B cell (primary cell): ENCODE measurements at regions of chr1 and their contacts with region 1.

Region 1: GRCh38 chr1:63691701-63692425 is 82.0 kb upstream of the ROR1 start:
- DNase-seq: peak; percentile 64
- ATAC-seq: peak; percentile 61
- H3K4me3 ChIP-seq: no peak overlapping the region
- H3K4me3 Mint-ChIP-seq: no peak overlapping the region
- H3K27ac ChIP-seq: no peak overlapping the region
- H3K27ac Mint-ChIP-seq: no peak overlapping the region
- H3K4me1 ChIP-seq: no peaks in the 10 kb centered on the region
- H3K4me1 Mint-ChIP-seq: no peaks in the 10 kb centered on the region
- H3K27me3 ChIP-seq: peaks cover 0 to 3% (median 0%) of the 10 kb centered on the region in 4 experiments
- H3K27me3 Mint-ChIP-seq: peaks cover 1% of the 10 kb centered on the region
- CTCF ChIP-seq: peak; percentile 83

Region 2: DNA sequence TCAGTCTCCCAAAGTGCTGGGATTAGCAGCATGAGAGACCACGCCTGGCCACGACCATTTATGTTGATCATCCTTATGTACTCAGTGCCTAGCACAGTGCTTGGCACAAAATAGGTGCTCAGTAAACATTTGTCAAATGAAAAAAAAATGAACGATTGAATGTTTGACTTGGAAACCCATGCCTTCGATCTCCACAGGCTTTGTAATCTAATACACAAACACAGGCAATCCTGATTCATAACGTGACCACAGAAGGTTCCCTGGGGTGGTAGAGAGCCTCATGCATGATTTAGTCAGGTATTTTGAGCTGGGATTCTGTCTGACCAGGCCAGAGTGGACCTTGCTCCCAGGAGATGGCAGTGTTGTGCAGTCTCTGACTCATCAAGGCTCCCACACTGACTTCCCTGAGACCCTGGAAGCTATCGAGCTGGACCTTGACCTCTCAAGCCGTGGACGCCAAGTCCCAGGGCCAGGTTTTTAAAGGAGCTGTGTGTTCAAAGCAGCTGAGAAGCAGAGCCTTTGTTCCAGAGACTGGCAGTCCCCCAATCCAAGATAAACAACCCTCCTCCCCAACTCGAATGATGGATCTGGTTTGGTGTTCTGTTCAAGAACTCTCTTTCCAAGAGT is 17.5 kb before region 1 on chr1:
- CTCF ChIA-PET with region 1: interaction called, 13 read pairs
- POLR2A ChIA-PET with region 1: no interaction called
- intact Hi-C with region 1: no loop called
- DNase-seq: no peak
- ATAC-seq: no peak
- H3K4me3 ChIP-seq: no peak overlapping the region
- H3K4me3 Mint-ChIP-seq: no peak overlapping the region
- H3K27ac ChIP-seq: no peak overlapping the region
- H3K27ac Mint-ChIP-seq: no peak overlapping the region
- H3K4me1 ChIP-seq: no peaks in the 10 kb centered on the region
- H3K4me1 Mint-ChIP-seq: no peaks in the 10 kb centered on the region
- H3K27me3 ChIP-seq: no peaks in the 10 kb centered on the region
- H3K27me3 Mint-ChIP-seq: no peaks in the 10 kb centered on the region
- CTCF ChIP-seq: no peak

Region 3: GRCh38 chr1:63773815-63774616 is 82.2 kb after region 1 on chr1 and contains the start of gene ROR1:
- CTCF ChIA-PET with region 1: interaction called, 15 read pairs
- POLR2A ChIA-PET with region 1: no interaction called
- intact Hi-C with region 1: loop called (anchors 1 kb)
- DNase-seq: peak; percentile 72
- ATAC-seq: peak; percentile 90
- H3K4me3 ChIP-seq: peak within 1 kb of the TSS; percentile 42 to 72 (median 53)
- H3K4me3 Mint-ChIP-seq: peak within 1 kb of the TSS; percentile 86
- H3K27ac ChIP-seq: no peak within 1 kb of the TSS
- H3K27ac Mint-ChIP-seq: peak within 1 kb of the TSS; percentile 42
- H3K4me1 ChIP-seq: peaks cover 12 to 21% of the 10 kb centered on the region in 2 donors
- H3K4me1 Mint-ChIP-seq: peaks cover 20% of the 10 kb centered on the region
- H3K27me3 ChIP-seq: peaks cover 0 to 31% (median 25%) of the 10 kb centered on the region in 4 experiments
- H3K27me3 Mint-ChIP-seq: peaks cover 55% of the 10 kb centered on the region
- CTCF ChIP-seq: peak; percentile 43
- total RNA-seq, gene ROR1: 16.0 and 16.3 TPM in 2 replicates

Region 4: GRCh38 chr1:64072089-64072793 is 380.4 kb after region 1 on chr1:
- CTCF ChIA-PET with region 1: no interaction called
- POLR2A ChIA-PET with region 1: no interaction called
- intact Hi-C with region 1: no loop called
- DNase-seq: no peak
- ATAC-seq: no peak
- H3K4me3 ChIP-seq: no peak overlapping the region
- H3K4me3 Mint-ChIP-seq: no peak overlapping the region
- H3K27ac ChIP-seq: no peak overlapping the region
- H3K27ac Mint-ChIP-seq: no peak overlapping the region
- H3K4me1 ChIP-seq: no peaks in the 10 kb centered on the region
- H3K4me1 Mint-ChIP-seq: no peaks in the 10 kb centered on the region
- H3K27me3 ChIP-seq: no peaks in the 10 kb centered on the region
- H3K27me3 Mint-ChIP-seq: peaks cover 6% of the 10 kb centered on the region
- CTCF ChIP-seq: no peak

Region 5: GRCh38 chr1:64136752-64137411 is 445.0 kb after region 1 on chr1:
- CTCF ChIA-PET with region 1: interaction called, 114 read pairs
- POLR2A ChIA-PET with region 1: no interaction called
- intact Hi-C with region 1: loop called (anchors 1 kb)
- DNase-seq: peak; percentile 68
- ATAC-seq: peak; percentile 80
- H3K4me3 ChIP-seq: no peak overlapping the region
- H3K4me3 Mint-ChIP-seq: no peak overlapping the region
- H3K27ac ChIP-seq: no peak overlapping the region
- H3K27ac Mint-ChIP-seq: no peak overlapping the region
- H3K4me1 ChIP-seq: no peaks in the 10 kb centered on the region
- H3K4me1 Mint-ChIP-seq: peaks cover 2% of the 10 kb centered on the region
- H3K27me3 ChIP-seq: peaks cover 0 to 4% (median 0%) of the 10 kb centered on the region in 4 experiments
- H3K27me3 Mint-ChIP-seq: peaks cover 15% of the 10 kb centered on the region
- CTCF ChIP-seq: peak; percentile 87